Naive thymus-derived CD4-positive, alpha-beta T cell (primary cell): ENCODE measurements at regions of chr6 and their contacts with region 1.

Region 1: DNA sequence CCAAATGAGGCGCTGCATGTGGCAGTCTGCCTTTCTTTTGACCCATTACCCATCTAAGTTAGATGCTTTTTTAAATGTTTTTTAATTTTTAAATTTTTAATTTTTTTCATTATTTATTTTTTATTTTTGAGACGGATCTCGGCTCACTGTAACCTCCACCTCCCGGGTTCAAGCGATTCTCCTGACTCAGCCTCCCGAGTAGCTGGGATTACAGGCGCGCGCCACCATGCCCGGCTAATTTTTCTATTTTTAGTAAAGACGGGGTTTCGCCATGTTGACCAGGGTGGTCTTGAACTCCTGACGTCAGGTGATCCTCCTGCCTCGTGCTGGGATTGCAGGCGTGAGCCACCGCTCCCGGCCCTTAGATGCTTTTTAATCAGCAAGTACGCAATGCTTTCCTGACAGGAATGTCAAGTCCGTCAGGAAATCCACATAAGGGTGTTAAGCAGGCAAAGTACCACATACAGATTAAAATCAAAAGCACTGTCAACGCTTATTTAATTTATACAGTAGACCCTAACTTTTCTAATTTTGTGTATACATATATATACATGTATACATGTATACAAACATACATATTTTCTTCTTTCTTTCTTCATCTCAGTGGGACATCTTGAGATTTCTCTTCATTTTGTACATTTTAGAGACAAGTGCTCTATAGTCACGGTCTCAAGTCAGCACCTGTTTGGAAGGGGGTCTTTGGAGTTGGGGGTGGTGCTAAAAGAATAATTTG is 995 bp upstream of the GSTA4 start:
- DNase-seq: peak in 5 of 9 donors; percentile 21 to 43 (median 35)
- ATAC-seq: no peak
- H3K4me3 ChIP-seq: peak overlapping the region; percentile 83
- H3K4me3 Mint-ChIP-seq: peak overlapping the region; percentile 87 to 98 (median 94)
- H3K27ac ChIP-seq: peak overlapping the region; percentile 43
- H3K27ac Mint-ChIP-seq: peak overlapping the region; percentile 97 to 100 (median 99)
- H3K4me1 ChIP-seq: peaks cover 4 to 5% of the 10 kb centered on the region in 2 donors
- H3K4me1 Mint-ChIP-seq: peaks cover 10 to 37% (median 29%) of the 10 kb centered on the region in 7 donors
- H3K27me3 ChIP-seq: no peaks in the 10 kb centered on the region
- H3K27me3 Mint-ChIP-seq: peaks cover 0 to 10% (median 0%) of the 10 kb centered on the region in 5 donors

Region 2: GRCh38 chr6:52361945-52362442 is 634.1 kb before region 1 on chr6 and contains the start of gene PAQR8:
- CTCF ChIA-PET with region 1: no interaction called
- POLR2A ChIA-PET with region 1: no interaction called
- intact Hi-C with region 1: loop called in 1 of 2 experiments (anchors 1 kb)
- DNase-seq: peak; percentile 77 to 89 (median 86)
- ATAC-seq: peak; percentile 95
- H3K4me3 ChIP-seq: peak within 1 kb of the TSS; percentile 90
- H3K4me3 Mint-ChIP-seq: peak within 1 kb of the TSS; percentile 83 to 100 (median 98)
- H3K27ac ChIP-seq: peak within 1 kb of the TSS; percentile 86
- H3K27ac Mint-ChIP-seq: peak within 1 kb of the TSS; percentile 90 to 99 (median 94)
- H3K4me1 ChIP-seq: peaks cover 25 to 28% of the 10 kb centered on the region in 2 donors
- H3K4me1 Mint-ChIP-seq: peaks cover 25 to 55% (median 45%) of the 10 kb centered on the region in 7 donors
- H3K27me3 ChIP-seq: no peaks in the 10 kb centered on the region
- H3K27me3 Mint-ChIP-seq: peaks cover 0 to 9% (median 0%) of the 10 kb centered on the region in 5 donors
- total RNA-seq, gene PAQR8: 7.5 to 46.2 (median 21.6) TPM

Region 3: GRCh38 chr6:52419809-52420670 is 576.0 kb before region 1 on chr6 and contains the start of gene EFHC1:
- CTCF ChIA-PET with region 1: interaction called, 3 read pairs
- POLR2A ChIA-PET with region 1: no interaction called
- intact Hi-C with region 1: loop called (anchors 1 kb)
- DNase-seq: peak; percentile 95 to 98 (median 97)
- ATAC-seq: peak; percentile 97
- H3K4me3 ChIP-seq: peak within 1 kb of the TSS; percentile 73
- H3K4me3 Mint-ChIP-seq: no peak within 1 kb of the TSS
- H3K27ac ChIP-seq: peak within 1 kb of the TSS; percentile 72
- H3K27ac Mint-ChIP-seq: peak within 1 kb of the TSS in 1 of 9 donors; percentile 96
- H3K4me1 ChIP-seq: peaks cover 13 to 19% of the 10 kb centered on the region in 2 donors
- H3K4me1 Mint-ChIP-seq: peaks cover 10 to 31% (median 24%) of the 10 kb centered on the region in 7 donors
- H3K27me3 ChIP-seq: no peaks in the 10 kb centered on the region
- H3K27me3 Mint-ChIP-seq: peaks cover 0 to 5% (median 0%) of the 10 kb centered on the region in 5 donors
- total RNA-seq, gene EFHC1: 2.4 to 13.8 (median 6.0) TPM

Region 4: GRCh38 chr6:52724406-52725121 is 271.5 kb before region 1 on chr6:
- CTCF ChIA-PET with region 1: no interaction called
- POLR2A ChIA-PET with region 1: no interaction called
- intact Hi-C with region 1: no loop called
- DNase-seq: peak in 7 of 9 donors; percentile 14 to 48 (median 25)
- ATAC-seq: peak; percentile 87
- H3K4me3 ChIP-seq: no peak overlapping the region
- H3K4me3 Mint-ChIP-seq: no peak overlapping the region
- H3K27ac ChIP-seq: no peak overlapping the region
- H3K27ac Mint-ChIP-seq: peak overlapping the region in 1 of 9 donors; percentile 16
- H3K4me1 ChIP-seq: no peaks in the 10 kb centered on the region
- H3K4me1 Mint-ChIP-seq: peaks cover 0 to 7% (median 0%) of the 10 kb centered on the region in 7 donors
- H3K27me3 ChIP-seq: no peaks in the 10 kb centered on the region
- H3K27me3 Mint-ChIP-seq: peaks cover 0 to 16% (median 0%) of the 10 kb centered on the region in 5 donors

Region 5: GRCh38 chr6:52881996-52882841 is 113.9 kb before region 1 on chr6:
- CTCF ChIA-PET with region 1: no interaction called
- POLR2A ChIA-PET with region 1: no interaction called
- intact Hi-C with region 1: loop called (anchors 1 to 2 kb)
- DNase-seq: peak; percentile 29 to 74 (median 61)
- ATAC-seq: peak; percentile 99
- H3K4me3 ChIP-seq: peak overlapping the region; percentile 57
- H3K4me3 Mint-ChIP-seq: peak overlapping the region; percentile 85 to 92 (median 88)
- H3K27ac ChIP-seq: no peak overlapping the region
- H3K27ac Mint-ChIP-seq: peak overlapping the region in 8 of 9 donors; percentile 7 to 86 (median 58)
- H3K4me1 ChIP-seq: no peaks in the 10 kb centered on the region
- H3K4me1 Mint-ChIP-seq: peaks cover 0 to 13% (median 0%) of the 10 kb centered on the region in 7 donors
- H3K27me3 ChIP-seq: no peaks in the 10 kb centered on the region
- H3K27me3 Mint-ChIP-seq: no peaks in the 10 kb centered on the region

Region 6: DNA sequence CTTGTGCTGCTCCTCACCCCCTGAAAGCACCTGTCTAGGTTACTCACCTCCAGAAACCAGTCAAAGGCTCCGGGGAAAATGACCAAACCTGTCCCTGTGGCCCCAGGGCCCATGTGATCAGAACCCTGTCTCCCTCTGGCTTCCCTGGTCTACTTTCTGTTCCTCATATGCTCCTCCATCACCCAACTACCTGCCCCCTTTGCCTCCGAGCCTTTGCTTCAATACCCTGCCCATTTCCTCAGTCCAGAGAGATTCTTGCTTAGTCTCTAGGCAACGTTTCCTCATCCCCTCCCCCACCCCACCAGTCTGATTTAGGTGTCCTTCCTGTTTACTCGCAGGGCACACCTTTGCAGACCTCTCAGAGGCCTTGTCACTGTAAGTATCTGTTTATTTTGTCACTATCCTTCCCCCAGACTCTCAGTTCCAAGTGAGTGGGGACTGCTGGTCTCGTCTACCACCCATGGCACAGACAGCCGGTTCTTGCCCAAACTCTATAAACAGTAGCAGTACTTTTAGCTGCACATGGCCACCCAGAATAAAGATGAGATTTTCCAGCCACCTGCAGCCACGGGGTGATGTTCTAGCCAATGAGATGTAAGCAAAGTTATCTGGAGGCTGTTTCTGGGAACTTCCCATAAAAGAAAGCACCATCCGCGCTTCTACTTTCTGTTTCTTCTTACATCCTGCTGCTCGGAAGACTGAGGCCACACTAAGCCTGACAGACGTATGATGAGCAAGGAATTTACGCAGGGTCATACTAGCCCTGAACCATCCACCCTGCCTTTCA is 339.3 kb after region 1 on chr6:
- CTCF ChIA-PET with region 1: no interaction called
- POLR2A ChIA-PET with region 1: no interaction called
- intact Hi-C with region 1: loop called in 1 of 2 experiments (anchors 5 kb)
- DNase-seq: peak; percentile 47 to 87 (median 75)
- ATAC-seq: peak; percentile 85
- H3K4me3 ChIP-seq: peak overlapping the region; percentile 50
- H3K4me3 Mint-ChIP-seq: peak overlapping the region; percentile 83 to 95 (median 88)
- H3K27ac ChIP-seq: peak overlapping the region; percentile 88
- H3K27ac Mint-ChIP-seq: peak overlapping the region; percentile 98 to 100 (median 99)
- H3K4me1 ChIP-seq: peaks cover 72 to 74% of the 10 kb centered on the region in 2 donors
- H3K4me1 Mint-ChIP-seq: peaks cover 54 to 95% (median 92%) of the 10 kb centered on the region in 7 donors
- H3K27me3 ChIP-seq: no peaks in the 10 kb centered on the region
- H3K27me3 Mint-ChIP-seq: no peaks in the 10 kb centered on the region

Region 7: GRCh38 chr6:53484476-53485280 is 488.6 kb after region 1 on chr6:
- CTCF ChIA-PET with region 1: no interaction called
- POLR2A ChIA-PET with region 1: no interaction called
- intact Hi-C with region 1: loop called in 1 of 2 experiments (anchors 10 kb)
- DNase-seq: peak; percentile 28 to 74 (median 60)
- ATAC-seq: peak; percentile 86
- H3K4me3 ChIP-seq: no peak overlapping the region
- H3K4me3 Mint-ChIP-seq: no peak overlapping the region
- H3K27ac ChIP-seq: no peak overlapping the region
- H3K27ac Mint-ChIP-seq: no peak overlapping the region
- H3K4me1 ChIP-seq: no peaks in the 10 kb centered on the region
- H3K4me1 Mint-ChIP-seq: peaks cover 0 to 19% (median 0%) of the 10 kb centered on the region in 7 donors
- H3K27me3 ChIP-seq: no peaks in the 10 kb centered on the region
- H3K27me3 Mint-ChIP-seq: peaks cover 20 to 34% (median 25%) of the 10 kb centered on the region in 5 donors

Region 8: DNA sequence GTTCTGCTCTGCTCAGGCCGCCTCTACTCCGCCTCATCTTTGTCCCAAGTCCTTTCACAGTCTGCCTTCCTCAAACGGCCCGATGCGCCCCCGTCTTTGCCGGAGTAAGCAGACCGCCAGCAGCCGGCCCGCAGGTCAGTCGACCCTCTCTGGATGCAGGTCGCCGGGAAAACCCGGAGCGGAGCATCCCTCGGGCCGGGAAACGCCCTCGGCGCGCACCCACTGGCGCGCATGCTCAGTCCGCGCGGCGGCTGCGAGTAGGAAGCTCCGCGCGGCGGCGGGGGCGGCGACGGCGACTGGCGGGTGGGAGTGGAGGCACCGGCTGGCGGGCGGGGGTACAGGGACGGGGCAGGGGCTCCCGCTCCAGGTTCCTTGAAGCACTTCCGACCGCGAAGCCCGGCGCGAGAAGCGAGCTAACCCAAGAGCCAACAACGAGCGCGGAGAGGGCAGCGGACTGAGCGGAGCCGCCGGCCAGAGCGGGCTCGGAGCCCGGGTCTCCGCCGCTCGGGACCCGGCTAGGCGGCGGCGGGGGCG is 798.7 kb after region 1 on chr6 and contains the start of gene LRRC1:
- CTCF ChIA-PET with region 1: no interaction called
- POLR2A ChIA-PET with region 1: no interaction called
- intact Hi-C with region 1: loop called (anchors 1 to 10 kb)
- DNase-seq: peak; percentile 61 to 94 (median 76)
- ATAC-seq: peak; percentile 78
- H3K4me3 ChIP-seq: peak within 1 kb of the TSS; percentile 96
- H3K4me3 Mint-ChIP-seq: peak within 1 kb of the TSS; percentile 93 to 98 (median 96)
- H3K27ac ChIP-seq: peak within 1 kb of the TSS; percentile 43
- H3K27ac Mint-ChIP-seq: peak within 1 kb of the TSS in 8 of 9 donors; percentile 75 to 91 (median 86)
- H3K4me1 ChIP-seq: peaks cover 7 to 13% of the 10 kb centered on the region in 2 donors
- H3K4me1 Mint-ChIP-seq: peaks cover 21 to 33% (median 28%) of the 10 kb centered on the region in 7 donors
- H3K27me3 ChIP-seq: peaks cover 0 to 8% of the 10 kb centered on the region in 2 donors
- H3K27me3 Mint-ChIP-seq: peaks cover 7 to 55% (median 18%) of the 10 kb centered on the region in 5 donors
- total RNA-seq, gene LRRC1: 1.2 to 3.6 (median 3.4) TPM